Pancreas (tissue), 10 donors: ENCODE measurements at regions of chr11 and their contacts with region 1.

Region 1: DNA sequence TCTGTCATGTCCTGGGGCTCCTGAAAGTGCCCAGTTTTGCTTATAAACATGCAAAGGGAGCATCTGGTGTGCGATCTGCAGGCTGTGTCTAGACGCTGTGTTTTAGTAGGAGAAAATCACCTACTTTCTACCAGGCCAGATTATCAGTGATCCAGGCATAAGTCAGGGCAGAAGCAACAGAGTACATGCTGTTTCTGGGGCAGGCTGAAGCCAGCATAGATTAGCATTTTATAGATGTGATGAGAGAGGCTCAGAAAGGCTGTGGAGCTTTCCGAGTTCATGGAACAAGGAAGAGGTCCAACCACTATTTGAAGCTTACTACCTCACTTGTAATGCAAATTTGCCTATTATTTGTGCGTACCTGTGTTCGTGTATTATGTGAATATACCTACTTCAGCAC is 1208.4 kb upstream of the TENM4 start:
- DNase-seq: no peak
- ATAC-seq: no peak
- H3K4me3 ChIP-seq: no peak overlapping the region
- H3K27ac ChIP-seq: no peak overlapping the region
- H3K4me1 ChIP-seq: no peaks in the 10 kb centered on the region
- H3K27me3 ChIP-seq: no peaks in the 10 kb centered on the region
- CTCF ChIP-seq: no peak

Region 2: GRCh38 chr11:80702264-80702663 is 53.1 kb after region 1 on chr11:
- intact Hi-C with region 1: loop called in 1 of 3 experiments (anchors 10 kb)
- DNase-seq: no peak
- ATAC-seq: no peak
- H3K4me3 ChIP-seq: no peak overlapping the region
- H3K27ac ChIP-seq: no peak overlapping the region
- H3K4me1 ChIP-seq: no peaks in the 10 kb centered on the region
- H3K27me3 ChIP-seq: no peaks in the 10 kb centered on the region
- CTCF ChIP-seq: no peak

Region 3: GRCh38 chr11:80722629-80723028 is 73.4 kb after region 1 on chr11:
- intact Hi-C with region 1: no loop called
- DNase-seq: no peak
- ATAC-seq: no peak
- H3K4me3 ChIP-seq: no peak overlapping the region
- H3K27ac ChIP-seq: no peak overlapping the region
- H3K4me1 ChIP-seq: no peaks in the 10 kb centered on the region
- H3K27me3 ChIP-seq: no peaks in the 10 kb centered on the region
- CTCF ChIP-seq: no peak